Ascending aorta (tissue), 2 donors: ENCODE measurements at regions of chr4 and their contacts with region 1.

Region 1: DNA sequence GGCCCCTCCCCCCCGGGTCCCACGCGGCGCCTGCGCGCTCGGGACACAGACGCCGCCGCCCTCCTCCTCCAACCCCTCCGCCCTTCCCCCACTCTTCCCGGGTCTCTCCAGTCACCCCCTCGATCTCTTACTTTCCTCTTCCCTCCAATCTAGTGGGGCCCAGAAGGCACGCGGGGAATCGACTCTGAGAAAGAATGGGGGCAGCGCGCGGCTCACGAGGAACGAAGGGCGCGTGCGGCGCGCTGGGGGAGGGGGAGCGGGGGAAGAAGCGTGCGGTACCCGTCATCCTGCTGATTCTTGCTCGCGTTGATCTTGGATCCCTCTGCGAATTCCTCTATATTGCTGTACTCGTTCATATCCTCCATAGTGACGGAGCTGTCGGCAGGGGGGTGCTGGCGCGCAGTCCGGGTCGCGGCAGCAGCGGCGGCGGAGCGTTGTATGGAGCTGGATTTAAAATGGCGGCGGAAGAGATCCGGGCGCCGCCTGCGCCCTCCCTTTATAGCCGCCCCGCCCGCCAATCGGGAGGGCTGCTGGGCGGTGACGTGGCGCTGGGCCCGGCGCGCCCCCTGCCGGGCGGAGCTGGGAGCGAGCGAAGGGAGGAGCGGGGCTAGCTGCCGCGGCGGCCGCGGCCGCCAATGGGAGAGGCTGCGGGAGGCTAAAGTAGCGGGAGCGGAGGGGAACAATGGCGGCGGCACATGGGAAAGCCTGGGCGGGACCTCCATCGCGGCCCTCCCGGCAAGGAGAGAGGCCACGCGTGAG is 1.1 kb downstream of the HNRNPDL start:
- DNase-seq: peak; percentile 57 to 94
- H3K4me3 ChIP-seq: peak overlapping the region; percentile 94 to 95
- H3K27ac ChIP-seq: peak overlapping the region; percentile 98
- H3K4me1 ChIP-seq: peaks cover 3 to 25% of the 10 kb centered on the region in 2 donors
- H3K27me3 ChIP-seq: no peaks in the 10 kb centered on the region
- CTCF ChIP-seq: peak; percentile 84 to 97 (median 92)

Region 2: GRCh38 chr4:82284858-82285805 is 144.0 kb before region 1 on chr4:
- intact Hi-C with region 1: loop called (anchors 1 kb)
- DNase-seq: peak; percentile 99 to 100
- H3K4me3 ChIP-seq: peak overlapping the region; percentile 53 to 58
- H3K27ac ChIP-seq: peak overlapping the region; percentile 58 to 66
- H3K4me1 ChIP-seq: peaks cover 0 to 5% of the 10 kb centered on the region in 2 donors
- H3K27me3 ChIP-seq: no peaks in the 10 kb centered on the region
- CTCF ChIP-seq: peak; percentile 70 to 100 (median 100)

Region 3: GRCh38 chr4:82462415-82462831 is 33.3 kb after region 1 on chr4:
- intact Hi-C with region 1: loop called (anchors 1 kb)
- DNase-seq: peak; percentile 79 to 96
- H3K4me3 ChIP-seq: no peak overlapping the region
- H3K27ac ChIP-seq: peak overlapping the region in 1 of 2 donors; percentile 8
- H3K4me1 ChIP-seq: no peaks in the 10 kb centered on the region
- H3K27me3 ChIP-seq: no peaks in the 10 kb centered on the region
- CTCF ChIP-seq: peak; percentile 48 to 92 (median 86)

Region 4: GRCh38 chr4:82661181-82661992 is 232.2 kb after region 1 on chr4:
- intact Hi-C with region 1: no loop called
- DNase-seq: no peak
- H3K4me3 ChIP-seq: no peak overlapping the region
- H3K27ac ChIP-seq: no peak overlapping the region
- H3K4me1 ChIP-seq: no peaks in the 10 kb centered on the region
- H3K27me3 ChIP-seq: no peaks in the 10 kb centered on the region
- CTCF ChIP-seq: no peak

Region 5: GRCh38 chr4:82900331-82901128 is 471.4 kb after region 1 on chr4 and contains the start of gene THAP9:
- intact Hi-C with region 1: loop called (anchors 2 kb)
- DNase-seq: peak; percentile 97 to 99
- H3K4me3 ChIP-seq: peak within 1 kb of the TSS; percentile 69 to 78
- H3K27ac ChIP-seq: peak within 1 kb of the TSS; percentile 98
- H3K4me1 ChIP-seq: peaks cover 0 to 20% of the 10 kb centered on the region in 2 donors
- H3K27me3 ChIP-seq: no peaks in the 10 kb centered on the region
- CTCF ChIP-seq: no peak
- total RNA-seq, gene THAP9: 0.32 TPM

Region 6: DNA sequence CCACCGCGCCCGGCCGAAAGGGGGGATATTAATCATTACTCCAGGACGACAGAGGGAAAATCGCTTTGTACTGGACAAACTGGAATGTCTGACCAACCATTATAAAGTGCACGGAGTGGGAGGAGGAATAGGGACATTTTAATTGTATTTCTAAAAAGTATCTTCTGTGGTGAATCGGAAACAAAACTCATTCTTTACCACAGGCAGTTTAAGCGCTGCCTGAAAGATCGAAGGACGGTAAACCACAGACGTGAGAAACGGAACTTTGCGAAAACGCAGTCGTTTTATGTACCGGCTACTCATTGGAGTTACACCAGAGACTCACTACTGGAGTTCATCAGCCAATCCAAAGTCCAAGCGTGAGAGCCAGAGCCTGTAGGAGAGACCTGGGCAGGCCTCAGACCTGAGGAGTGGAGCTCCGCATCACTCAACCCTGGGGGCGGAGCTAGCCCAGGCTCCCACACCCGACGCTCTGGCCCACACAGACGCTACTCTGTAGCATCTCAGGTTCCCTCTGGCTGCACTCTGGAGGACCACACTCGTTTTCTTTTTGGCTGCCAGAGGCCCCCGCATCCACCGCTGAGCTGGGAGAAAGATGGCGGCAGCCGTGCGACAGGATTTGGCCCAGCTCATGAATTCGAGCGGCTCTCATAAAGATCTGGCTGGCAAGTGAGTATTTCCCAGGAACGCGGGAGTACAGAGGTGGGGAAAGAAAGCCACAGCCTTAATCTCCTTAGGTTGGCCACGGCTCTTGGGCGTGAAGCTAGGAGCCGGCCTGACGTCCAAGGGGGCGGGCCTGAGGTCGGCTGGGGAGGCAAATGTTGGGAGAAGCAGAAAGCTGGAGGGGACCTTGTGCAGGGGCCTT is 605.7 kb after region 1 on chr4 and contains the start of gene COPS4:
- intact Hi-C with region 1: loop called (anchors 1 kb)
- DNase-seq: peak; percentile 95 to 99
- H3K4me3 ChIP-seq: peak within 1 kb of the TSS; percentile 76 to 79
- H3K27ac ChIP-seq: peak within 1 kb of the TSS; percentile 92 to 94
- H3K4me1 ChIP-seq: peaks cover 0 to 16% of the 10 kb centered on the region in 2 donors
- H3K27me3 ChIP-seq: no peaks in the 10 kb centered on the region
- CTCF ChIP-seq: peak; percentile 15 to 59 (median 43)
- total RNA-seq, gene COPS4: 83.5 TPM

Region 7: DNA sequence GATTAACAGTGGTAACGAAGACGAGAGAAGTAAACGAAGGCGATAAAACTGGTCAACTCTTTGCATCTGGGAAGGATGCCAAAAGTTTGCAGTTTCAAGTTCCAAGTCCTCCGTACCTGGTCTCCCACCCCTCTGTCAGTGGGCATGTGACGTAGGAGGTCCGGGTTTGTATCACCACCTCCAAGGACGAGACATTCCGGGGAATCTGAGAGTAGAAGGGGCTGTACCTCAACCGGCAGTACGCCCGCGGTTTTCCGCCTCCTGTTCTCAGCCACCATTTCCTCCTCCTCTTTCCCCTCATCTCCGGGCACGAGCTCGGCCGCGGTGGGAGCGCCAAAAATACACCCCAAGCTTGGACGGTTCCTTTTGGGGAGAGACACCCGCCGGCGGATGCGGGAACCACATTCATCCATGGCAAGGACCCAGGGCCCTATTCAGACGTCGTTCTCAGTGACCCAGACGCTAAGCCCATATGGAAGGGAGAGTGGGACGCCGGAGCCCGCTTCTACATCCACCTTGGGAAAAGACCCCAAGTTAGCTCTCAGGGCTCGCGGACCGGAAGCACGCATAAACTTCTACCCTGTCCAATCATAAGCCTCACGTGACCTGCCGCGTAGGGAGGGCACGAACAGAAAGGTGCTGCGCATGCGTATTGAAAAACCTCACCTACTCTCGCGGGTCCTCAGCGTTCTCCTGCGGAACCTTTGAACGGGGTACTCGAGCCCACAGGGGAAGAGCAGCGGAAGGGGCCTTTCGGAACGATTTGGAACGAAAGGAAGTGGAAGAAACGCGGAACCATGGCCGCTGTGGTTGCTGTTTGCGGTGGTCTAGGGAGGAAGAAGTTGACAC is 1026.4 kb after region 1 on chr4 and contains the starts of genes HELQ and MRPS18C:
- intact Hi-C with region 1: loop called (anchors 10 kb)
- DNase-seq: peak; percentile 94 to 99
- H3K4me3 ChIP-seq: peak within 1 kb of the TSS; percentile 85 to 89
- H3K27ac ChIP-seq: peak within 1 kb of the TSS; percentile 98 to 99
- H3K4me1 ChIP-seq: peaks cover 0 to 14% of the 10 kb centered on the region in 2 donors
- H3K27me3 ChIP-seq: no peaks in the 10 kb centered on the region
- CTCF ChIP-seq: peak in 2 of 3 experiments; percentile 26 to 42
- total RNA-seq, gene HELQ: 1.1 TPM
- total RNA-seq, gene MRPS18C: 13.0 TPM